HepG2 (cell line): ENCODE measurements at regions of chr3 and their contacts with region 1.

Region 1: GRCh38 chr3:128950223-128950938 is 43.5 kb downstream of the CFAP92 start:
- DNase-seq: peak; percentile 80
- ATAC-seq: peak; percentile 99
- H3K4me3 ChIP-seq: peak overlapping the region in 2 of 3 experiments; percentile 17 to 55; a peak in 3 of 6 replicates
- H3K27ac ChIP-seq: no peak overlapping the region
- H3K4me1 ChIP-seq: peaks cover 13% of the 10 kb centered on the region
- H3K27me3 ChIP-seq: peaks cover 0 to 2% of the 10 kb centered on the region in 2 experiments; a peak in 2 of 5 replicates
- CTCF ChIP-seq: peak; percentile 91
- EP300 ChIP-seq: no peak
- POLR2A ChIP-seq: no peak
- RAD21 ChIP-seq: peak; percentile 84

Region 2: DNA sequence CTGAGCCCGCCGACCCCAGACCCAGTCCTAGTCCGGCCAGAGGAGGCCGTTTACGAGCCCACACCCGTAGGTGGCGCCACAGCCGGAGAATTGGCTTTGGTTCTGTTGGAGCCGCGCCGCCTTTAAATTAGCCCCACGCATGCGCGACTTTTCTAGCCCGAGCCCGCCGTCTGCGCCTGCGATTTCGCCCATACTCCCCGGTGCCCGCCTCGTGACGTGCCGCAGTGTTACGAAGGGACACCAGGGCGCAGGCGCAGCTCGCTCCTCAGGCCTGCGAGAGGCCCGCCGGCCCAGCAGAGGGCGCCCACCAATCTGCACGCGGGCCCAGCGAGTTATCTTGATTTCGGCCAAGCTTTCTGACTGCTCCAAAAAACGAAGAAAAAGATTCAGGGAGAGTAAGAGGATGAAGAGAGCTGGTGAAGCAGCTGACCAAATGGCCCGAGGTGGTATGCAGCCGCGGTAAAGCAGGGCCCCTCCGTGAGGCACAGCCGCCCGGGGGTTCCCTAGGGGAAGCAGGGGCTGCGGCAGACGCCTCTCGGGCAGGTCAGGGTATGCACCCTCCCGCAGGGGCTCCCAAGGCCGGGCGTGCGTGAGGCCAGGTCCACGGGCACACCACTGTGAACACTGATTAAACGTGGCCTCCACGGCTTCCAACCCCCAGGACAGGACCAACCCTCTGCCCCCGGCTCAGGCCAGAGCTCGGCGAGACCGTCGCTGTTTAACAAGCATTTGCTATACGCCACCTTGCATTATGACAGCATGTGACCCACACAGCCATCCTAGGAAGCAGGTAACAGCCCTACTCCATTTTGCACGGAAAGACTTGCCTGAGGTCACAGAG is 332.6 kb before region 1 on chr3:
- CTCF ChIA-PET with region 1: interaction called, 4 read pairs
- POLR2A ChIA-PET with region 1: no interaction called
- in situ Hi-C with region 1: no loop called
- intact Hi-C with region 1: loop called (anchors 10 kb)
- DNase-seq: peak; percentile 90
- ATAC-seq: peak; percentile 83
- H3K4me3 ChIP-seq: peak overlapping the region; percentile 71 to 83 (median 76)
- H3K27ac ChIP-seq: peak overlapping the region; percentile 71
- H3K4me1 ChIP-seq: peaks cover 40% of the 10 kb centered on the region
- H3K27me3 ChIP-seq: no peaks in the 10 kb centered on the region
- CTCF ChIP-seq: peak; percentile 94
- EP300 ChIP-seq: no peak
- POLR2A ChIP-seq: peak; percentile 37 to 61; a peak in 3 of 4 replicates
- RAD21 ChIP-seq: peak; percentile 78

Region 3: GRCh38 chr3:128879125-128879969 is 71.0 kb before region 1 on chr3 and contains the start of gene ACAD9:
- CTCF ChIA-PET with region 1: interaction called, 7 read pairs
- POLR2A ChIA-PET with region 1: interaction called, 6 read pairs
- in situ Hi-C with region 1: no loop called
- intact Hi-C with region 1: loop called (anchors 5 kb)
- DNase-seq: peak; percentile 95
- ATAC-seq: peak; percentile 87
- H3K4me3 ChIP-seq: peak within 1 kb of the TSS; percentile 94 to 95 (median 94)
- H3K27ac ChIP-seq: peak within 1 kb of the TSS; percentile 79
- H3K4me1 ChIP-seq: peaks cover 40% of the 10 kb centered on the region
- H3K27me3 ChIP-seq: peaks cover 0 to 3% of the 10 kb centered on the region in 2 experiments; a peak in 1 of 5 replicates
- CTCF ChIP-seq: peak; percentile 17
- EP300 ChIP-seq: no peak
- POLR2A ChIP-seq: peak; percentile 86 to 96
- RAD21 ChIP-seq: 0 out of 2 replicates have a peak, but pooled peaks have one; percentile 19
- total RNA-seq, gene ACAD9: 37.3 and 38.2 TPM in 2 replicates

Region 4: DNA sequence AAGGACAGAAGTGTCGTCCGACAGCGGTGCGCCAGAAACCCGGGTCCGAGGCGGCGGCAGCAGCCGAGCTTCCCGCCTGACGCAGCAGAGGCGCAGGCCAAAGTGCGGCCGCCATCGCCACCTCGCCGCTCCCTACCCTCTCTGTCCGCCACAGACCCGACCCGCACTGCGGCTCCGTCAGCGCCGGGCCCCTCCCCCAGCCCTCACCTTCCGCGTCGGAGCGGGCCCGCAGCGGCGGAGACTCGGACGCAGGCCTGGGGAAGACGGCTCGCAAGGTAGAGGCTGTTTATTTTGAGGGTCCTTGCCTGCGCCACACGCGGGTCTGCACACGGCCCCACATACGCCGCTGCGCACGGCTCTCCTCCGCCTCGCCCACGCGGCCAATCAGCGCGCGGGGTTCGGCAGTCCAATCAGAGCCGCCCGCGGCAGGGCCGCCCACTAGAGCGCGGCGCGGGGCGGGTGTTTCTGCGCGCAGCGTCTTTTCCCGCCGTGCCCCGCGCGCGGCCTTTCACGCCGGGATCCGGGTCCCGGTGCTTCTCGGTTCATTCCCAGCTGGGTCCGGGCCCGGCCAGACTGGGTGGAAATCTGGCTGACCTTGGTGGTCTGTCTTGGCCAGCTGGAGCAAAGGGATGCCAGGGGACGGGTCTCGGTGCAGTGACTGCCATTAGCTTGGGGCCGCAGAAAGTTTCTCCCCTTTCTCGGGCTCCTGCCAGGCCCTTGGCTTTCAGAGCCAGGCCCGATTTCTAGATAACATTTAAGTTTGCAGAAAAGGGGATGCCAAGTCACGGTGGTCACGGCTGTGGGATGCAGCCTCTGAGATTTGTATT is 233.4 kb after region 1 on chr3 and contains the start of gene CNBP:
- CTCF ChIA-PET with region 1: no interaction called
- POLR2A ChIA-PET with region 1: no interaction called
- in situ Hi-C with region 1: no loop called
- intact Hi-C with region 1: no loop called
- DNase-seq: peak; percentile 83
- ATAC-seq: peak; percentile 98
- H3K4me3 ChIP-seq: peak within 1 kb of the TSS; percentile 91 to 95 (median 95)
- H3K27ac ChIP-seq: peak within 1 kb of the TSS; percentile 99
- H3K4me1 ChIP-seq: peaks cover 40% of the 10 kb centered on the region
- H3K27me3 ChIP-seq: no peaks in the 10 kb centered on the region; a peak in 1 of 5 replicates
- CTCF ChIP-seq: no peak; the same call in 1 of the 2 replicates
- EP300 ChIP-seq: no peak; a peak in 1 of 4 replicates
- POLR2A ChIP-seq: peak; percentile 85 to 94
- RAD21 ChIP-seq: no peak; the same call in 1 of the 2 replicates
- total RNA-seq, gene CNBP: 354 and 539 TPM in 2 replicates